PC-9 (cell line): ENCODE measurements at regions of chr5 and their contacts with region 1.

Region 1: GRCh38 chr5:121273833-121274433 is 577.7 kb upstream of the FTMT start:
- DNase-seq: peak; percentile 40 to 87
- H3K4me3 ChIP-seq: no peak overlapping the region
- H3K27ac ChIP-seq: peak overlapping the region; percentile 93
- H3K4me1 ChIP-seq: peaks cover 14% of the 10 kb centered on the region
- H3K27me3 ChIP-seq: no peaks in the 10 kb centered on the region
- CTCF ChIP-seq: no peak

Region 2: DNA sequence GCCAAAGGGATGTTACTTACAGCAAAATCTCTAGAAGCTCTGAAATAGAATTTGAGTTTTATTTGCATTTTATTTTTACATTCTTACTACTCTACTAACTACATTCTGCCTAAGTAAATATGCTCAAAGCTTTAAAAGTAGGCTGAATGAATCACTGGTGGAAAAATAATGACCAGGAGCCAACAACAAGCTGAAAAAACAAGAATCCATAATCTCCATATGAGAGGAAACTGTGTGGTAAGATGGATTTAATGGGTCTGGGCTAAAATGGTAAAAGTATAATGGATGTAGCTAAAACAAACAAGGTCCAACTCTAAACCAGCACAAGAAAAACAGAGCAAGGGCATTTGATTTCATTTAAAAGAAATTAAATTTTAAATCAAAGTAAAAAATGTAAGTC is 52.0 kb after region 1 on chr5:
- CTCF ChIA-PET with region 1: no interaction called
- POLR2A ChIA-PET with region 1: interaction called, 20 read pairs
- intact Hi-C with region 1: no loop called
- DNase-seq: no peak
- H3K4me3 ChIP-seq: no peak overlapping the region
- H3K27ac ChIP-seq: no peak overlapping the region
- H3K4me1 ChIP-seq: no peaks in the 10 kb centered on the region
- H3K27me3 ChIP-seq: no peaks in the 10 kb centered on the region
- CTCF ChIP-seq: no peak